Uterus (tissue), 4 donors: ENCODE measurements at regions of chrX and their contacts with region 1.

Region 1: GRCh38 chrX:7462110-7462509 is 314.2 kb upstream of the PUDP start:
- DNase-seq: no peak
- H3K4me3 ChIP-seq: no peak overlapping the region
- H3K27ac ChIP-seq: no peak overlapping the region
- H3K4me1 ChIP-seq: no peaks in the 10 kb centered on the region
- H3K27me3 ChIP-seq: no peaks in the 10 kb centered on the region
- CTCF ChIP-seq: no peak
- POLR2A ChIP-seq: no peak

Region 2: DNA sequence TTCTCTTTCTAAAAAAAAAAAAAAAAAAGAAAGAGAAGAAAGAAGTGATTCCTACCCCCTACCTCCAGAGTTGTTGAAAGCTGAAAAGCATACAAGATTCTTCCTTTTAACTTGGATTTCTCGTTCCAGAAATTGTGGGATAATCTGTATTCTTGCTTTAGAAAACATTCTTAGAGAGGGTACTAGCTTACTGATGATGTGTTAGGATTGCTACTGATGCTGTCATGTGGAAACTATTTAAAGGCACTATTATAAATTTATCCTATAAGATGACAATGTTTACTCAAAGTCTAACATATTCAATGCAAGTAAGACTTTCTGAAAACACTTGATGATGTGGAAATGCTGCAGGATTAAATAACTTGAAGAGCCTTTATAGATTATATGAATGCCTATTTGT is 110.2 kb before region 1 on chrX:
- intact Hi-C with region 1: loop called (anchors 5 kb)
- DNase-seq: no peak
- H3K4me3 ChIP-seq: no peak overlapping the region
- H3K27ac ChIP-seq: no peak overlapping the region
- H3K4me1 ChIP-seq: no peaks in the 10 kb centered on the region
- H3K27me3 ChIP-seq: no peaks in the 10 kb centered on the region
- CTCF ChIP-seq: no peak
- POLR2A ChIP-seq: no peak

Region 3: DNA sequence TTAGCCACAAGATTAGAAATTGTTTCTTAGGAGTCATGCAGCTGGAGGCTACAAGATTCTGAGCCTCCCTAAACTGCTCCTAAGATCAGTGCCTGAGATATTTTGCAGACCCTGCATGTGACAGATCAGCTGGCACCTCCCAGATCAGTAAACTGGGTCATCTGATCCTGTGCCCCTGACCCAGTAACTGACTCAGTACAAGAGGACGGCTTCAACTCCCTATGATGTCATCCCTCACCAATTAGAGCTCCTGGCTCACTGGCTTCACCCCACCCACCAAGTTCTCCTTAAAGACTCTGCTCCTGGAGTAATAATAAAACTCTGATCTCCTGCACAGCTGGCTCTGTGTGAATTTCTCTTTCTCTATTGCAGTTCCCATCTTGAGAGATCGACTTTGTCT is 510.5 kb after region 1 on chrX:
- intact Hi-C with region 1: no loop called
- DNase-seq: no peak
- H3K4me3 ChIP-seq: no peak overlapping the region
- H3K27ac ChIP-seq: no peak overlapping the region
- H3K4me1 ChIP-seq: no peaks in the 10 kb centered on the region
- H3K27me3 ChIP-seq: no peaks in the 10 kb centered on the region
- CTCF ChIP-seq: no peak
- POLR2A ChIP-seq: no peak